ENCODE measurements at regions of chr9 and their contacts with region 1.

Region 1: GRCh38 chr9:122904823-122905710 is at the start of gene RC3H2:
- DNase-seq: peak; percentile 98 to 99
- ATAC-seq: peak; percentile 98 to 99 (median 98)
- H3K4me3 ChIP-seq: peak within 1 kb of the TSS; percentile 84
- H3K27ac ChIP-seq: peak within 1 kb of the TSS; percentile 87
- H3K4me1 ChIP-seq: peaks cover 30% of the 10 kb centered on the region
- H3K27me3 ChIP-seq: no peaks in the 10 kb centered on the region
- CTCF ChIP-seq: no peak
- total RNA-seq, gene RC3H2: 24.8 to 33.7 (median 31.6) TPM

Region 2: GRCh38 chr9:122940603-122941559 is 35.8 kb after region 1 on chr9 and contains the start of gene RABGAP1:
- intact Hi-C with region 1: loop called in 1 of 2 experiments (anchors 5 kb)
- DNase-seq: peak; percentile 100
- ATAC-seq: peak; percentile 98 to 100 (median 99)
- H3K4me3 ChIP-seq: peak within 1 kb of the TSS; percentile 85
- H3K27ac ChIP-seq: peak within 1 kb of the TSS; percentile 89
- H3K4me1 ChIP-seq: peaks cover 27% of the 10 kb centered on the region
- H3K27me3 ChIP-seq: no peaks in the 10 kb centered on the region
- CTCF ChIP-seq: no peak
- total RNA-seq, gene RABGAP1: 32.8 to 57.9 (median 39.2) TPM

Region 3: DNA sequence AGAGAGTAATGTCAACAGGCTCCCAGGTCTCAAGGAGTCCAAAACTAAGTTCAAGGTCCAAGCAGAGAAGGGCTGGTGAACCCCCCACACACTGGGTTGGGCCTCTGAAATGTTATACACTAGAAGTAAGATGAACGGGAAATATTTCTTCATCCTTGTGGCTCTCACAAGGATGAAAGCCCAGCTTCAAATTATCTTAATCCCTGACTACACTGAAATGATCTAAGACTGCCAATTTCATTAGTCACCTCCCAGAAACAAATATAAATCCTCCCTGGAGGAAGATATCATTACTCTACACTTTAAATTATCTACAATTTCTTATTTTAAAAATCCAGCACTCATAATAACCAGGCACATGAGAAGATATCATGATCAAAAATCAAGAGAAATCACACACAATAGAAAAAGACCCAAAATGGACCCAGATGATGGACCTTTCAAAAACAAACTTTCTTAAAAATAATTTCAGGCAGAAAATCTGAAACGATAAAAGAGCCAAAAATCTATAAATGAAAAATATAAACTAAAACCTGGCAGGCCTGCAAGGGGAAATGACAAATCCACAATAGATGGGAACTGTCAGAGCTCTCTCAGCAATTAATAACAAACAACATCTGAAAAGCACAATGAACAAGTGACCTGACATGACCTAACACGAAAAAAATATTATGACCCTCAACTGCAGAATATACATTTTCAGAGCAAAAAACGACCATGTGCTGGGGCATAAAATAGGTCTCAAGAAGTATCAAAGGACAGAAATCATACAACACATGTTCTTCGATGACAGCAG is 245.8 kb after region 1 on chr9:
- intact Hi-C with region 1: no loop called
- DNase-seq: no peak
- ATAC-seq: no peak
- H3K4me3 ChIP-seq: no peak overlapping the region
- H3K27ac ChIP-seq: no peak overlapping the region
- H3K4me1 ChIP-seq: no peaks in the 10 kb centered on the region
- H3K27me3 ChIP-seq: no peaks in the 10 kb centered on the region
- CTCF ChIP-seq: no peak

Measured in psoas muscle (tissue), 8 donors.